Heart left ventricle (tissue), 16 donors: ENCODE measurements at regions of chr19 and their contacts with region 1.

Region 1: DNA sequence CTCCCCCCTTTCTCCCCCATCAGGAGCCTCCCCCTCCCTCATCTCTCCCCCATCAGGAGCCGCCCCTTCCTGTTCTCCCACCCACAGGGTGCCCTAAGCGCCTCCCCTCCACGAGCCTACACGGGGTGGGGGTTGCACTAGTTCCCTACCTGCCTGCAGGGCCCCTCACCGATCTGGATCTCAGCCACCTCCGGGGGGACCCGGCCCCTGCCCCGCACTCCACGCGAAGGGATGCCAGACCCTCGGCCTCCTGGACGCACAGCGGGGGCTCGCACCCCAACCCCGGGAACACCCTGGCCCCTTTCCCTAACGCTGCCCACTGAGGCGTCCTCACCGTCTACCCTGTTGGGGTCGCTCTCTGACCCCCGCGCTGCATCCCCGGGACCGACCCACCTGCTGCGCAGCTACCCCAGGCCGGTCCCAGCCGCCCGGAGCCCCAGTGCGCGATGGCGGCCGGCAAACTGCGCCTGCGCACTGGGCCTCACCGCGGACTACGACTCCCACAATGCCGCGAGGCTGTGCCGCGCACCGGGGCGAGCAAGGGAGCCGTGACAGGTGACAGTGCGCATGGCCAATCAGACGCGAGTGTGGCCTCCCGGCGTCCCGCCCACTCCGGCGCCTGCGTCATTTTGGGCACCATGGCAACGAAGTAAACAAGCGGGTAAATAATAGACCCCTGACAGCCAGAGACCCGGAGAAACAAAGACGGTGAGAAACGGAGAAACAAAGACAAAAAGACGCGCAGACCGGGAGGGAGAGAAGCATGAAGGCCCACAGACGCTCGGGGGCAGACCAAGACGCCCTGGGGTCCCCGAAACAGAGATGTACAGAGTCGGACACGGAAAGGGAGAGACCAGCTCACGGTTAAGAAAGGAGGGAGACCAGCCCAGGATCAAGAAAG is at the start of gene ZSCAN18:
- DNase-seq: peak; percentile 98 to 99 (median 99)
- ATAC-seq: peak; percentile 99 to 100 (median 100)
- H3K4me3 ChIP-seq: peak within 1 kb of the TSS; percentile 83 to 100 (median 98)
- H3K27ac ChIP-seq: peak within 1 kb of the TSS; percentile 52 to 98 (median 94)
- H3K4me1 ChIP-seq: peaks cover 0 to 24% (median 10%) of the 10 kb centered on the region in 12 donors
- H3K27me3 ChIP-seq: no peaks in the 10 kb centered on the region
- CTCF ChIP-seq: no peak
- POLR2A ChIP-seq: peak in 1 of 2 donors; percentile 86
- total RNA-seq, gene ZSCAN18: 45.1 to 114 (median 73.4) TPM

Region 2: GRCh38 chr19:58033741-58034471 is 64.1 kb before region 1 on chr19 and contains the start of gene ZSCAN1:
- intact Hi-C with region 1: loop called in 1 of 10 experiments (anchors 10 kb)
- DNase-seq: peak; percentile 93 to 96 (median 95)
- ATAC-seq: peak; percentile 97 to 100 (median 99)
- H3K4me3 ChIP-seq: peak within 1 kb of the TSS; percentile 38 to 79 (median 54)
- H3K27ac ChIP-seq: peak within 1 kb of the TSS in 3 of 12 donors; percentile 29 to 57 (median 45)
- H3K4me1 ChIP-seq: peaks cover 0 to 16% (median 1%) of the 10 kb centered on the region in 12 donors
- H3K27me3 ChIP-seq: peaks cover 0 to 10% (median 0%) of the 10 kb centered on the region in 9 donors
- CTCF ChIP-seq: no peak
- POLR2A ChIP-seq: peak in 1 of 2 donors; percentile 52
- total RNA-seq, gene ZSCAN1: not detected

Region 3: GRCh38 chr19:58044886-58045285 is 53.1 kb before region 1 on chr19:
- intact Hi-C with region 1: no loop called
- DNase-seq: no peak
- ATAC-seq: no peak
- H3K4me3 ChIP-seq: no peak overlapping the region
- H3K27ac ChIP-seq: no peak overlapping the region
- H3K4me1 ChIP-seq: no peaks in the 10 kb centered on the region
- H3K27me3 ChIP-seq: no peaks in the 10 kb centered on the region
- CTCF ChIP-seq: no peak
- POLR2A ChIP-seq: no peak

Region 4: DNA sequence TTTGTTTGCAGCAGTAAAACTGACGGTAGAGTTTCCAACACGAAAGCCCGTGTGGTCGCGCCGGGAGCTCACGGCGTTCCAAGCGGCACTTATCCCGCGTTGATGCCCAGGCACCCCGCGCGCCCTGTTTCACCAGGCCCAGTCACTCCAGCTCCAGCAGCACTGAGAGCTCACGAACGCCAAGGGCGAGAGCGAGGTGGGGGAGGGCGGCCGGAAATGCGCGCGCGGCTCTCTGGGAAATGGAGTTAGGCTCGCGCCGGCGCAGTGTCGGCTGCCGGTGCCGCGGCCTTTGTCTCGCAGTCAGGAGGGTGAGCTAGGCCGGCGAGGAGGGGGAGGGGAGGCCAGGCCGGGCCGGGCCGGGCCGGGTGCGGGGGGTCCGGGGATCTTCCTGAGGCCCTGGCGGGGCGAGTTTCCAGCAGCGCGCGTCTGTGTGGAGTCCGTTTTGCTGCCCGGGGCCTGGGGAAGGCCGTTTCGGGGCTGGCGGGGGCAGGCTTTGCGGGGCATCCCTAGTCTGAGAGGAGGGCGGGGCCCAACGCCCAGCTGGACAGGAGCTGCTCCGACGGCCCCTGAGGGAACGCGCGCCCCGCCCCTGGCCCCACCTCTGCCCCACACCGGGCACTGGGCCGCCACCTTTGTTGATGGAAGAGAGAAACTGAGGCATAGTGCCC is 38.9 kb before region 1 on chr19 and contains the start of gene ZNF135:
- intact Hi-C with region 1: loop called in 7 of 10 experiments (anchors 2 to 5 kb)
- DNase-seq: peak; percentile 93 to 95 (median 94)
- ATAC-seq: peak; percentile 95 to 97 (median 97)
- H3K4me3 ChIP-seq: peak within 1 kb of the TSS; percentile 47 to 95 (median 72)
- H3K27ac ChIP-seq: peak within 1 kb of the TSS; percentile 78 to 100 (median 95)
- H3K4me1 ChIP-seq: peaks cover 0 to 25% (median 11%) of the 10 kb centered on the region in 12 donors
- H3K27me3 ChIP-seq: no peaks in the 10 kb centered on the region
- CTCF ChIP-seq: no peak
- POLR2A ChIP-seq: peak in 1 of 2 donors; percentile 31
- total RNA-seq, gene ZNF135: 2.1 to 4.5 (median 3.4) TPM